A549 (cell line): ENCODE measurements at regions of chr2 and their contacts with region 1.

Region 1: GRCh38 chr2:36785179-36785795 is 88.8 kb downstream of the VIT start:
- DNase-seq: peak; percentile 71 to 79
- ATAC-seq: peak; percentile 78 to 88
- H3K4me3 ChIP-seq: no peak overlapping the region
- H3K27ac ChIP-seq: no peak overlapping the region
- H3K4me1 ChIP-seq: no peaks in the 10 kb centered on the region
- CTCF ChIP-seq: peak; percentile 95
- EP300 ChIP-seq: no peak
- POLR2A ChIP-seq: no peak
- RAD21 ChIP-seq: peak; percentile 84 to 90

Region 2: DNA sequence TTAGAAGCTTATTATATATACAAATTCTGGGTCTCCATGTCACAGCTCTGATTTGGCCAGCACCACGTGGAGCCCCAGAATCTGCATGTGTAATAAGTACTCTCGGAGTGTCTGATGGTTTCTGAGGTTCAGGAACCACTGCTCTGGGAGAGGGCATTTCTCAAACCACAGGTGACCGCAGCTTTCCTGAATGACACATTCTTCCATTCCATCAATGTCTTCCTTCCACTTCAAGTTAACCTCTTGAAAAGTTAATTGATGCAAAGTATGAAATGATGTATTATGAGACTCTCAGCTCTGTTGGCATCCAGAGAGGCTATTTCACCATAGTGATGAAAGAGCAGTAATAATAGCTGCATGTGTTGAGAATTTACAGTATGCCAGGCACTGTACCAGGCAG is 491.0 kb before region 1 on chr2:
- CTCF ChIA-PET with region 1: no interaction called
- POLR2A ChIA-PET with region 1: no interaction called
- DNase-seq: no peak
- ATAC-seq: no peak
- H3K4me3 ChIP-seq: no peak overlapping the region
- H3K27ac ChIP-seq: no peak overlapping the region
- H3K4me1 ChIP-seq: no peaks in the 10 kb centered on the region
- CTCF ChIP-seq: no peak
- EP300 ChIP-seq: no peak
- POLR2A ChIP-seq: no peak
- RAD21 ChIP-seq: no peak

Region 3: GRCh38 chr2:36753706-36754221 is 31.5 kb before region 1 on chr2:
- CTCF ChIA-PET with region 1: interaction called, 10 read pairs
- POLR2A ChIA-PET with region 1: no interaction called
- DNase-seq: no peak
- ATAC-seq: peak in 1 of 2 experiments; percentile 30; a peak in 1 of 6 replicates
- H3K4me3 ChIP-seq: no peak overlapping the region
- H3K27ac ChIP-seq: no peak overlapping the region
- H3K4me1 ChIP-seq: no peaks in the 10 kb centered on the region
- CTCF ChIP-seq: no peak
- EP300 ChIP-seq: no peak
- POLR2A ChIP-seq: no peak
- RAD21 ChIP-seq: no peak

Region 4: DNA sequence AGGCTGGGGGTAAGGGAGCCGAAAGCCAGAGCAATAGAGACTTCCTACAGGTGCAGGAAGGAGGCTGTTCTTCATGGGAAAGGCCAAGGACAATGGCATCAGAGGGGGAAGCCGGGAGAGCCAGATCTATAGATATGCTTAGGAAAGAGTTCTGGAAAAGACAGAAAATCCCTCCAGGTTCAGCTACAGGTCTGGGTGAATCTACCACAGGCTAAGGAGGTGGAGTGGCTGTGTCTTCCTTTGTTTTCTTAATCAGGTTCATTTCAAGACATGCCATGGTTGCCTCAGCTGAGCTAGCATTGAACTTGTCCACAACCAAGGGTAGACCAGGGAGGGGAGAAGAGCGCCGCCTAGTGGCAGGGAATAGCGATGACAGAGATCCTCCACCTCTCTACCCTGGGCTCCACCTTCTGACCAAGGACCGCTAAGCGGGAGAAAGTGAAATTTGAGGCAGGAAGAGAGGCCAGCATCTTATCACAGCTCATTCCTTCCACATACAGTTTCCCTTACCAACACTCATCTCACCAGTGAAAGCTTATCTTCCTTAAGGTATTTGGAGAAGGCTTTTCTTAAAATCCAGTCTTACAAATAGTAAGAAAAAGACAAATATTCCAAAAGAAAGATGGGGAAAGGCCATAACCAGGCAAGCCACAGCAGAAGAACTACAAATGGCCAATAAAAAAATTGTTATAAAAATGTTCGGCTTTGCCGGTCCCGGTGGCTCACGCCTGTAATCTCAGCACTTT is 14.6 kb before region 1 on chr2:
- CTCF ChIA-PET with region 1: interaction called, 69 read pairs
- POLR2A ChIA-PET with region 1: no interaction called
- DNase-seq: peak; percentile 74 to 76
- ATAC-seq: peak; percentile 65 to 96
- H3K4me3 ChIP-seq: no peak overlapping the region
- H3K27ac ChIP-seq: no peak overlapping the region
- H3K4me1 ChIP-seq: no peaks in the 10 kb centered on the region
- CTCF ChIP-seq: peak; percentile 78
- EP300 ChIP-seq: no peak
- POLR2A ChIP-seq: no peak
- RAD21 ChIP-seq: peak; percentile 47 to 75; a peak in 4 of 5 replicates

Region 5: GRCh38 chr2:36800381-36800780 is 15.1 kb after region 1 on chr2:
- CTCF ChIA-PET with region 1: interaction called, 192 read pairs
- POLR2A ChIA-PET with region 1: no interaction called
- DNase-seq: no peak
- ATAC-seq: no peak
- H3K4me3 ChIP-seq: no peak overlapping the region
- H3K27ac ChIP-seq: no peak overlapping the region
- H3K4me1 ChIP-seq: no peaks in the 10 kb centered on the region
- CTCF ChIP-seq: no peak
- EP300 ChIP-seq: no peak
- POLR2A ChIP-seq: no peak
- RAD21 ChIP-seq: no peak

Region 6: GRCh38 chr2:36918307-36918706 is 133.0 kb after region 1 on chr2:
- CTCF ChIA-PET with region 1: interaction called, 12 read pairs
- POLR2A ChIA-PET with region 1: no interaction called
- DNase-seq: no peak
- ATAC-seq: no peak
- H3K4me3 ChIP-seq: no peak overlapping the region
- H3K27ac ChIP-seq: no peak overlapping the region
- H3K4me1 ChIP-seq: no peaks in the 10 kb centered on the region
- CTCF ChIP-seq: peak; percentile 43; the same call in 2 of the 3 replicates
- EP300 ChIP-seq: no peak
- POLR2A ChIP-seq: no peak
- RAD21 ChIP-seq: peak; percentile 34 to 71

Region 7: DNA sequence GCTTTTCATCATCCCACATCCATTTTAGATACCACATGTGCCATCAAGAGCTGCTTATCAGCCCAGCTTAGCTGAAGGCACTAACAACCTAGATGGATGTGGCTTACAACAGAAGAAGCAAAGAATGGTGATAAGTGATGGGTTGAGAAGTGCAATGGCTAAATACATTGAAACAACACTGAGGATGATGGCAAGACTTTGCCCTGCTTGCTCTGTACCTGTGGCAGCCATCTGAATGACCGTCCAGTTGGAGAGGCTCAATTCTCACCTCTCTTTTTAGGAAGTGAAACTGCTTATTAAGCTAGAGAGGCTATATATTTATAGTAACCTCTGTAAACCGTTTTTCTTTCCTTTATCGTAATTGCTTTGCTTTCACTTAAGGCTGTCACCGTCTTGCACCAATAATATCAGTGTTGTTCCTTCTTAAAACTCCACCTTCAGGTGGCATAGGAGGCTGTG is 304.8 kb after region 1 on chr2:
- CTCF ChIA-PET with region 1: no interaction called
- POLR2A ChIA-PET with region 1: no interaction called
- DNase-seq: no peak
- ATAC-seq: no peak
- H3K4me3 ChIP-seq: no peak overlapping the region
- H3K27ac ChIP-seq: no peak overlapping the region
- H3K4me1 ChIP-seq: peaks cover 8% of the 10 kb centered on the region; the same call in 2 of the 3 replicates
- CTCF ChIP-seq: no peak
- EP300 ChIP-seq: no peak
- POLR2A ChIP-seq: no peak
- RAD21 ChIP-seq: no peak